ENCODE measurements at regions of chrX and their contacts with region 1.

Region 1: GRCh38 chrX:143476751-143477150 is 40.5 kb downstream of the SPANXN3 start:
- DNase-seq: no peak
- ATAC-seq: no peak
- H3K4me3 ChIP-seq: no peak overlapping the region
- H3K27ac ChIP-seq: no peak overlapping the region
- H3K4me1 ChIP-seq: no peaks in the 10 kb centered on the region
- H3K27me3 ChIP-seq: no peaks in the 10 kb centered on the region
- CTCF ChIP-seq: no peak

Region 2: GRCh38 chrX:142733327-142733726 is 743.4 kb before region 1 on chrX:
- CTCF ChIA-PET with region 1: no interaction called
- POLR2A ChIA-PET with region 1: no interaction called
- intact Hi-C with region 1: loop called (anchors 5 kb)
- DNase-seq: no peak
- ATAC-seq: no peak
- H3K4me3 ChIP-seq: no peak overlapping the region
- H3K27ac ChIP-seq: no peak overlapping the region
- H3K4me1 ChIP-seq: no peaks in the 10 kb centered on the region
- H3K27me3 ChIP-seq: no peaks in the 10 kb centered on the region
- CTCF ChIP-seq: no peak

Region 3: DNA sequence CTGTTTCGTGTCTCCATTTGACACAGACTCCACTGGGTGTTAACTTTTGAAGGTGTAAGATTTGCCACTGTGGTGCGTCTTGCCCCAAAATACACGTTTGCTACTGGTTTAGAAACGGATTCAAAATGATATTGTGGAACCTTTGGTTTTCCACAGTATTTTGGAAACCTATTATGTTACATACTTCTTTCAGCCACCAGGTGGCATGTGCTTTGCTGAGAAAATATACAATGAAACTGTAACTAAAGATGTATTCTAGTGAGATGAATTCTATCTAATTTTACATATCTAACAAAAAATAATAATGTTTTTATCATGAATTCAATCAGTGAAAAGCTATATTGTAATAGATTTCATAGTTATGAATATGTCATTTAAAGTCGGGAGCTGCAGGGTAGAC is 187.6 kb after region 1 on chrX:
- CTCF ChIA-PET with region 1: no interaction called
- POLR2A ChIA-PET with region 1: no interaction called
- intact Hi-C with region 1: no loop called
- DNase-seq: peak; percentile 53
- ATAC-seq: no peak
- H3K4me3 ChIP-seq: no peak overlapping the region
- H3K27ac ChIP-seq: no peak overlapping the region
- H3K4me1 ChIP-seq: no peaks in the 10 kb centered on the region
- H3K27me3 ChIP-seq: no peaks in the 10 kb centered on the region
- CTCF ChIP-seq: peak; percentile 65